ENCODE measurements at regions of chr6 and their contacts with region 1.

Region 1: GRCh38 chr6:90393232-90393884 is 96.7 kb upstream of the BACH2 start:
- DNase-seq: no peak
- H3K4me3 ChIP-seq: no peak overlapping the region
- H3K27me3 ChIP-seq: peaks cover 7% of the 10 kb centered on the region
- CTCF ChIP-seq: peak; percentile 77

Region 2: GRCh38 chr6:89940225-89941027 is 452.9 kb before region 1 on chr6:
- CTCF ChIA-PET with region 1: interaction called, 25 read pairs
- POLR2A ChIA-PET with region 1: no interaction called
- DNase-seq: no peak
- H3K4me3 ChIP-seq: no peak overlapping the region
- H3K27me3 ChIP-seq: peaks cover 2% of the 10 kb centered on the region; the same call in 1 of the 2 replicates
- CTCF ChIP-seq: peak; percentile 82

Region 3: GRCh38 chr6:89970609-89971337 is 422.6 kb before region 1 on chr6:
- CTCF ChIA-PET with region 1: interaction called, 27 read pairs
- POLR2A ChIA-PET with region 1: no interaction called
- DNase-seq: no peak
- H3K4me3 ChIP-seq: no peak overlapping the region
- H3K27me3 ChIP-seq: 0 out of 2 replicates have a peak, but pooled peaks cover 1% of the 10 kb centered on the region
- CTCF ChIP-seq: peak; percentile 71

Region 4: DNA sequence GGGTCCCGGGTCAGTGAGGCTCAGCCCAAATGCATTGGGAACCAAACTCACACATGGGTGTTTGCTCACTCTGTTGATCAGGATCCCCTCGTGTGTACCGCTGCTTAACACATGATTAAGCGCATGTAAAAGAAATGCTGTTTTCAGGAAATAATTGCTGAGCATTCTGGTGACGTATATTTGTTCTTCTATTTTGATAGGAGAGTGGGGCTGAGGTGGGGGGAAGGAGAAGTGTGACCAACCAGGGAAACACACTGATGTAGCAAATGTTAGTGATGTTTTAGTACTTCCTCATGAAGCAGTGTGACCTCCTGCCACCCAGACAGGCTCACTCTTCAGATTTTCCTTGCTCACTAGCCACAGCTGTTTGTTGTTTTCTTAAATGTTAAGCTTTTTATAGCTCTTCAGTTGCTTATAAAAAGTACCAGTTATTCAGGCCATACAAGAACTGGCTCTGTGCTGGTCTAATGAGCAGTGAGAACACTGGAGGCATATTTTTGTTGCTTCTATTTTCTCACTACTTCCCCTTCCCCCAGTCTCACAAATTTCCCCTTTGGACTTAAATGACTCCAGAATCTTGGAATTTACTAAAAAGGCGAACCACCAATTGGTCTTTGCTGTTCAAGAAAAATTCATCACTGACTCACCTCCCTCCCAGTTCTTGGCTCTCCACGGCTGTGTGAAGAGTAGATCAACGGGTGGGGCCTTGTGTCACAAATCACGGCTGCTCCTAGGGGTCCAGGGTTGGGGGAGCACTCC is 17.5 kb before region 1 on chr6:
- CTCF ChIA-PET with region 1: interaction called, 30 read pairs
- POLR2A ChIA-PET with region 1: interaction called, 5 read pairs
- DNase-seq: peak; percentile 81
- H3K4me3 ChIP-seq: no peak overlapping the region
- H3K27me3 ChIP-seq: no peaks in the 10 kb centered on the region
- CTCF ChIP-seq: no peak

Region 5: DNA sequence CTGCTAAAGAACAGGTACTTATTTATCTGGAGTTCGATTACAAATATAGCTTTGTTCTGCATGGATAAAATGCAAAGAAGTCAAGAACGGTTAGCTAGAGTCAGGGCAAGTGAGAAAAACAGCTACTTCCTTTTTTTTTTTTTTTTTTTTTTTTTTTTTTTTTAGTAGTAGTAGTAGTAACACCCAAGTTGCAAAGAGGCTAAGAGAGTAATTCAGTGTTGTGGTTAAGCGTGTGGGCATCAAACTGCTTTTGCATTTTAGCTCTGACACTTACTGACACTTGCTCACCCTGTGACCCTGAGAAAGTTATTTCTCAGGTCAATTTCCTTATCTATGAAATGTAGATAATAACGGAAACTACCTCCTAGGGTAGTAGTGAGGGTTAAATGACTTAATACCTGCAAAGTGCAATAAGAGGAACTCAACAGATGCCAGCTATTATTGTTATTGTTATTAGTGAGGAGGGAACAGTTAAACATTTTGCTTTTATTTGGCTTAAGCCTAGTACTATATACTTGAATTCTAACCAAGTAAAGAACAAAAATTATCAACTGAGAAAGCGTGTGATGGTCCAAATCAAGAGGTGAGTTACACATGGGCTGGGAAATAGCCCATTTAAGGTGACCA is 10.0 kb before region 1 on chr6:
- CTCF ChIA-PET with region 1: interaction called, 30 read pairs
- POLR2A ChIA-PET with region 1: no interaction called
- DNase-seq: no peak
- H3K4me3 ChIP-seq: no peak overlapping the region
- H3K27me3 ChIP-seq: peaks cover 8% of the 10 kb centered on the region
- CTCF ChIP-seq: no peak

Region 6: GRCh38 chr6:90403489-90404381 is 10.4 kb after region 1 on chr6:
- CTCF ChIA-PET with region 1: interaction called, 21 read pairs
- POLR2A ChIA-PET with region 1: no interaction called
- DNase-seq: peak; percentile 8
- H3K4me3 ChIP-seq: no peak overlapping the region
- H3K27me3 ChIP-seq: peaks cover 6% of the 10 kb centered on the region
- CTCF ChIP-seq: no peak

Region 7: GRCh38 chr6:90411292-90411781 is 18.0 kb after region 1 on chr6:
- CTCF ChIA-PET with region 1: interaction called, 11 read pairs
- POLR2A ChIA-PET with region 1: no interaction called
- DNase-seq: no peak
- H3K4me3 ChIP-seq: no peak overlapping the region
- H3K27me3 ChIP-seq: peaks cover 3% of the 10 kb centered on the region; the same call in 1 of the 2 replicates
- CTCF ChIP-seq: no peak

Measured in BJ (cell line).